ENCODE measurements at regions of chrX and their contacts with region 1.

Region 1: GRCh38 chrX:115047181-115047580 is 29.8 kb upstream of the IL13RA2 start:
- DNase-seq: no peak
- ATAC-seq: no peak
- H3K4me3 ChIP-seq: no peak overlapping the region
- H3K27ac ChIP-seq: no peak overlapping the region
- H3K4me1 ChIP-seq: peaks cover 0 to 3% (median 0%) of the 10 kb centered on the region in 9 donors
- H3K27me3 ChIP-seq: peaks cover 0 to 49% (median 0%) of the 10 kb centered on the region in 7 donors
- CTCF ChIP-seq: no peak

Region 2: GRCh38 chrX:115093191-115093590 is 46.0 kb after region 1 on chrX:
- intact Hi-C with region 1: loop called in 1 of 10 experiments (anchors 1 kb)
- DNase-seq: no peak
- ATAC-seq: no peak
- H3K4me3 ChIP-seq: no peak overlapping the region
- H3K27ac ChIP-seq: no peak overlapping the region
- H3K4me1 ChIP-seq: no peaks in the 10 kb centered on the region
- H3K27me3 ChIP-seq: peaks cover 0 to 25% (median 0%) of the 10 kb centered on the region in 7 donors
- CTCF ChIP-seq: no peak

Measured in heart right ventricle (tissue), 16 donors.